ENCODE measurements at regions of chr16 and their contacts with region 1.

Region 1: GRCh38 chr16:58767581-58767980 is 33.5 kb upstream of the GOT2 start:
- H3K4me3 ChIP-seq: no peak overlapping the region
- H3K27ac ChIP-seq: no peak overlapping the region
- H3K4me1 ChIP-seq: no peaks in the 10 kb centered on the region
- CTCF ChIP-seq: no peak

Region 2: DNA sequence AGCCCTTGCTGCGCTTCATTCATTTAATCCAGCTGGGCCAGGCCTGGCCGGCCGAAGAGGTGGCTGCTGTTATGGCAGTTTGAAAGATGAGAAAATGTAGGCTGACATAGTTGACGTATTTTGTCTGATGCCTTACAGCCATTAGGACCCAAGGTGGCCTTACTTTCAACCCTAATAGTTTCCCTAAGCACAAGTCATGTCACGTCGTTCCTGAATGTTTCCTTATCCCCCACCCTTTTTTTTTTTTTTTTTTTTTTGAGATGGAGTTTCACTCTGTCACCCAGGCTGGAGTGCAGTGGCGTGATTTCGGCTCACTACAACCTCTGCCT is 33.2 kb before region 1 on chr16:
- CTCF ChIA-PET with region 1: no interaction called
- POLR2A ChIA-PET with region 1: no interaction called
- H3K4me3 ChIP-seq: no peak overlapping the region; the same call in 1 of the 2 replicates
- H3K27ac ChIP-seq: no peak overlapping the region
- H3K4me1 ChIP-seq: peaks cover 8% of the 10 kb centered on the region; the same call in 1 of the 2 replicates
- CTCF ChIP-seq: no peak

Region 3: DNA sequence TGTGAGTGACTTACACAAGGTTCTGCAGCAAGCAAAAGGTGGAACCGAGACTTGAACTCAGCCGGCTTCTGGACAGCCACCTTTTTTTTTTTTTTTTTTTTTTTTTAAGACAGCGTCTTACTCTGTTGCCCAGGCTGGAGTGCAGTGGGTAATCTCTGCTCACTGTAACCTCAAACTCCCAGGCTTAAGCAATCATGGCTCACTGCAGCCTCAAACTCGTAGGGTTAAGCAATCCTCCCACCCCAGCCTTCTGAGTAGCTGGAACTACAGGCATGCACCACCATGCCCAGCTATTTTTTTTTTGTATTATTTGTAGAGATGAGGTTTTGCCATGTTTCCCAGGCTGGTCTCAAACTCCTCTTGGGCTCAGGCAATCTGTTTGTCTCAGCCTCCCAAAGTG is 21.8 kb after region 1 on chr16:
- CTCF ChIA-PET with region 1: no interaction called
- POLR2A ChIA-PET with region 1: no interaction called
- H3K4me3 ChIP-seq: no peak overlapping the region
- H3K27ac ChIP-seq: no peak overlapping the region
- H3K4me1 ChIP-seq: no peaks in the 10 kb centered on the region; the same call in 1 of the 2 replicates
- CTCF ChIP-seq: no peak

Region 4: DNA sequence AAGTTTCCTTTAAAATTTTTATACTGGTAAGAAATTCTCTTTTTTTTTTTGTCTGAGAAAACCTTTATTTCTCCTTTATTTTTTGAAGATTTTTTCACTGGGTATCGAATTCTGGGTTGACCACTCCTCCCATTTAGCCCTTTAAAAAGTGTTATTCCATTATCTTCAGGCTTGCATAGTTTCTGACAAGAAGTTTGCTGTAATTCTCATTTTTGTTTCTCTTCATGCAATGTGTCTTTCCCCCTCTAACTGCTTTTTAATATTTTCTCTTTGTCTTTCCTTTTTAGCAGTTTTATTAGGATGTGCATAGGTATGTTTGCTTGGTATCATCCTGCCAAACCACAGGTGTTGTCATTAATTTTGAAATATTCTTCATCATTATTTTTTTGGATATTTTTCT is 34.3 kb after region 1 on chr16:
- CTCF ChIA-PET with region 1: no interaction called
- POLR2A ChIA-PET with region 1: no interaction called
- H3K4me3 ChIP-seq: no peak overlapping the region
- H3K27ac ChIP-seq: no peak overlapping the region
- H3K4me1 ChIP-seq: no peaks in the 10 kb centered on the region
- CTCF ChIP-seq: no peak

Region 5: DNA sequence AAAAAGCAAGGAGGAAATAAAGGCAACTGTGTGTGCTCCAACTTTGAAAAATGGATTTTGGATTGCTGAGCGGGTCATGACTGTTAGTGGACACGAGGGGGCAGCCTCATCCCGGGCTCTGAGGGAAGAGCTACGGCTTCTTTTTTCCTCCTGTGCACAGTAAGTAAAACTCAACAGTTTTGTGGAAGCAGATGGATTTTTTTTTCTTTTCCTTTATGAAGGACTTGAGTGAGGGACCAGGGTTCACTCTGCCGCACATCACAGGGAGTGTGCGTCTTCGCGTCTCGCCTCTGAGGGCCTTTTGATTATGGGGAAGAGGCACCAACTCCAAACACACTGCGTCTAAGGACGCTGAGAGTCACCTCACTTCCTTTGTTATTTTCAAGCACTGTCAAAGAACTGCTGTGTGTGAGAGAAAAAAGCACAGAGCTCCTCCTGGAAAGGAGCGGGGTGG is 46.8 kb after region 1 on chr16:
- CTCF ChIA-PET with region 1: interaction called, 10 read pairs
- POLR2A ChIA-PET with region 1: no interaction called
- H3K4me3 ChIP-seq: no peak overlapping the region; the same call in 1 of the 2 replicates
- H3K27ac ChIP-seq: no peak overlapping the region
- H3K4me1 ChIP-seq: no peaks in the 10 kb centered on the region
- CTCF ChIP-seq: peak; percentile 71

Region 6: DNA sequence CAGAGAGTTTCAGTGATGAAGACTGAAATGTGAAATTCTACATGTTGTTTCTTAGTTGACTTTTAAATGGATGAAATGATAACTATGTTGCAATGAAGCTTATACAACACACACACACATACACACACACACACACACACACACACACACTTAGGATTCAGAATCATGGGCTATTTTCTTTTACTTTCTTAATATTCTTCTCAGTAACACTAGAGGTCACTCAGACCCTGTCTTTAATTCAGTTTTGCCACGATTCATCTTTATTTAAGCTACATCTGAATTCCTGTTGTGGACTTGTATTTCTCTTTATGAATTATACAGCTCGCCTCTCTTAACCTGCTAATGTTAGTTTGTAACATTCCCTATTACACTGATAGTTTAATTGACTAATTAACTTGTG is 76.1 kb after region 1 on chr16:
- CTCF ChIA-PET with region 1: no interaction called
- POLR2A ChIA-PET with region 1: no interaction called
- H3K4me3 ChIP-seq: no peak overlapping the region
- H3K27ac ChIP-seq: no peak overlapping the region
- H3K4me1 ChIP-seq: no peaks in the 10 kb centered on the region
- CTCF ChIP-seq: 0 out of 2 replicates have a peak, but pooled peaks have one; percentile 11

Measured in HEK293 (cell line).